Common myeloid progenitor, CD34-positive (primary cell): ENCODE measurements at regions of chr6 and their contacts with region 1.

Region 1: DNA sequence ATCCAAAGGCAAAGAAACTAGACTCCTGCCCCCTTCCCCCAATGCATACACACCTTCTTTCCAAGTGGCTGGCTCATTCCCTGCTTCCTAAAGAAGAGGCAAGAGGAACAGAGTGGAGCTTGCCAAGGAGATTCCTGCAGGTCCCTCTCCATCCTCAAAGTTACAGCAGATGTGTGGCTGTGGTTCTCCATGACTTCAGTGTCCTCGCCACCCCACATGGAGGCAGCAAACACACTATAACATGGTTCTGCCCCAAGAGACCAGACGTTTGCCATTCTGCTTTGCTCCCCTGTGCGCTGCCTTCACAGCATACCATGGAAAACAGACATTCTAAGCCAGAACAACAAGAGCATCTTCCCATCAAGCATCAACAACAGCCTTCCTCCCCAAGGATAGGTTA is 84.4 kb downstream of the BACH2 start:
- DNase-seq: peak in 2 of 3 donors; percentile 48 to 54
- H3K4me3 ChIP-seq: no peak overlapping the region
- H3K27ac ChIP-seq: no peak overlapping the region
- H3K4me1 ChIP-seq: peaks cover 2 to 40% (median 22%) of the 10 kb centered on the region in 4 experiments
- H3K27me3 ChIP-seq: no peaks in the 10 kb centered on the region

Region 2: GRCh38 chr6:90068264-90068663 is 144.0 kb before region 1 on chr6:
- CTCF ChIA-PET with region 1: no interaction called
- POLR2A ChIA-PET with region 1: no interaction called
- DNase-seq: no peak
- H3K4me3 ChIP-seq: no peak overlapping the region
- H3K27ac ChIP-seq: no peak overlapping the region
- H3K4me1 ChIP-seq: peaks cover 0 to 4% (median 0%) of the 10 kb centered on the region in 4 experiments
- H3K27me3 ChIP-seq: no peaks in the 10 kb centered on the region

Region 3: DNA sequence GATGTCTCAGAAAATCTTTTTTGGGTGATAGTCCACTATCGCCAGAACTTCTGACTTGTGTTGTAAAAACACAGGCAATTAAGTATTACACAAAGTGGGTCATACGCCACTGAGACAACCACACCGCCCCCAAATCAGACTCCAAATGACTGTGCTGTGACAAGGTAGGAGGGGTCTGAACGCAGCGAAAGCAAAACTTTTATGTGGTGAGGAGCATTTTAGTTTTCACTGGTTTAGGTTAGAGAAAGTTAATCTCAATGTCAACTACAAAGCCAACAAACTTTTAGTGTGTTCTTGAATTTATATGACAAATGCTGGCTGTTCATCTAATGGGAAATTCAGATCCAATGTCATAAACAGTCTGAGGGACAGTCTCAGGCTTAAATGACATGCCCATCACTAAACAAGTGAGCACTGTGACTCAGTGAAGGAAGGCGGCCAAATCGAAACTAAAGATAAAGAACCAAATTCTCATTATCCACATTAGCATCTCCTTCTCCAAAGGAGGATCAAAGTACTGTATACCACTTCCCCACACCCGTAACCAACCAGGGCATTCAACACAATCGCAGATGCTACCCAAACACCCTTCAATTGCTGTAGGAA is 131.3 kb before region 1 on chr6:
- CTCF ChIA-PET with region 1: no interaction called
- POLR2A ChIA-PET with region 1: no interaction called
- DNase-seq: no peak
- H3K4me3 ChIP-seq: no peak overlapping the region
- H3K27ac ChIP-seq: no peak overlapping the region
- H3K4me1 ChIP-seq: peaks cover 3 to 17% (median 10%) of the 10 kb centered on the region in 4 experiments
- H3K27me3 ChIP-seq: no peaks in the 10 kb centered on the region

Region 4: GRCh38 chr6:90202156-90202555 is 10.1 kb before region 1 on chr6:
- CTCF ChIA-PET with region 1: interaction called, 10 read pairs
- POLR2A ChIA-PET with region 1: no interaction called
- DNase-seq: no peak
- H3K4me3 ChIP-seq: no peak overlapping the region
- H3K27ac ChIP-seq: no peak overlapping the region
- H3K4me1 ChIP-seq: no peaks in the 10 kb centered on the region
- H3K27me3 ChIP-seq: no peaks in the 10 kb centered on the region

Region 5: DNA sequence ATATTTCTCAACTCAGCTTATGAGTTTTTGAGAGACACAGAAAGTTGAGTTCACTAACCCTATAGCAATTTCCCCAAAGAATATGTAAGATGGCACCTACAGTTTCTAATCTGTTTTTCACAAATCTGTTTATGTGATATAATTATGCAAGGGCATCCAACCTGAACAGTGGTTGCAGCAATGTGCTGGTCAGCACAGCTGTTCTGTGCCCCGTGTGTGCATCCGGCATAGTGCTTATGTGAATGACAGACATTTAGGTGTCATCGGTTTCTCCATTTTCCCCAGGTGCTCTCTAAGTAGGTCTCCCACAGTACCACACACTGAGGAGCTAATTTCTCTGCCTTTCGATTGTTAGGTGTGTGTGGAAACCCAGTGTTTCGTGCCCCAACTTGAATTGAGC is 92.0 kb after region 1 on chr6:
- CTCF ChIA-PET with region 1: no interaction called
- POLR2A ChIA-PET with region 1: no interaction called
- DNase-seq: no peak
- H3K4me3 ChIP-seq: no peak overlapping the region
- H3K27ac ChIP-seq: no peak overlapping the region
- H3K4me1 ChIP-seq: no peaks in the 10 kb centered on the region
- H3K27me3 ChIP-seq: peaks cover 0 to 4% (median 0%) of the 10 kb centered on the region in 5 experiments

Region 6: DNA sequence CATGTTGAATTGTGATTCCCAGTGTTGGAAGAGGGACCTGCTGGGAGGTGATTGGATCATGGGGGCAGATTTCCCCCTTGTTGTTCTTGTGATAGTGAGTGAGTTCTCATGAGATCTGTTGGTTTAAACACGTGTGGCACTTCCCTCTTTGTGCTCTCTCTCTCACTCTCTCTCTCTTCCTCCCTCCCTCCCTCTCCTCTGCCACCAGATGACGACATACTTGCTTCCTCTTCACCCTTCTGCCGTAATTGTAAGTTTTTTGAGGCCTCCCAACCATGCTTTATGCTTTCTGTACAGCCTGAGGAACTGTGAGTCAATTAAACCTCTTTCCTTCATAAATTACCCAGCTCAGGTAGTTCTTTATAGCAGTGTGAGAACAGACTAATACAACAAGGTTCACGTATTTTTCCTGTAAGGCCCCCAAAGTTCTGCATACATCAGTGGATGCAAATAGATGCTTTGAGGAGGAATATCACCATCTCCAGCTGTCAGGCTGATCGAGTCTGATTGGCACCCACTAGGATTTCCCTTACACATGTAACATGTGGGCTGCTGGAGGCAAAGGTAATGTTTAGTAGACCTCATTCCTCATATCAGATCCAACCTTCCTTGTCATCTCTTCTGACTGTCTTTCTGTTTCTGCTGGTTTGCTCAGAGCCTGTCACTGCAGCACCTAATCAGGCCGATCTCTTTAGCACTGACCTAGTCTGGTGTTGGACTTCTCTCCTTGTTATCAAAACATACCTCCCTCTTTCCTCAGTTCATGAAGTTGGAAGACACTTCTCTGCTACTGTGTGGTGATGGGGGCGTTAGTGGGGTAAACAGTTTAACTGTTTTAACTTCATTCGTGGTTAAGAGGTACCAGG is 138.6 kb after region 1 on chr6:
- CTCF ChIA-PET with region 1: no interaction called
- POLR2A ChIA-PET with region 1: no interaction called
- DNase-seq: peak; percentile 88 to 96 (median 95)
- H3K4me3 ChIP-seq: no peak overlapping the region
- H3K27ac ChIP-seq: peak overlapping the region in 1 of 2 experiments; percentile 12
- H3K4me1 ChIP-seq: peaks cover 7 to 12% (median 8%) of the 10 kb centered on the region in 4 experiments
- H3K27me3 ChIP-seq: no peaks in the 10 kb centered on the region